Mucosa of descending colon (tissue), 3 donors: ENCODE measurements at regions of chr11 and their contacts with region 1.

Region 1: DNA sequence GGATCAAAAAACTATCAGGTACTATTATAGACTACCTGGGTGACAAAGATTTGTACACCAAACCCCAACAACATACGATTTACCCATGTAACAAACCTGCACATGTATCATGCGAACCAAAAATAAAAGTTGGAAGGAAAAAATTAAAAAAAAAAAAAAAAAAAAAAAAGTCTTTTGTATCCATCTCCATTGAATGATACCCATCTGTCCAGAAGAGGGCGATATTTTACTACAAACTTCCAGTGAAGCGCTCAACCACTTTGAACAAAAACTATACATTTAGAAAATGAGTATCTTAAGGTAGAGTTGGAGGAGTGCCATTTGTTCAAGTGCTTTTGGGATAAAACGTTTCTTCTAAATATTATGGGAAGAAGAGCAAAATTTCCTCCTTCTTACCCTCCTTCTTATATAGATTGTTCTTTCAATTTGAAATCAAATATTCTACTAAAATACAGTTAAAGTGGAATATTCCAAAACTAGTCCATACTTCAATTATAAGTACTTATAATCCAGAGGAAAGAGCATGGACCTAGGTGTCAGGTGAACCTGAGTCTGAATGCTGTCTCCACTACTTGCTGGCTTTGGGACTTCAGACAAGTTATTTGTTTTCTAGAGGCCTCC is 23.3 kb downstream of the ARL14EP start:
- DNase-seq: peak in 1 of 3 donors; percentile 39
- ATAC-seq: peak; percentile 64
- H3K4me3 ChIP-seq: no peak overlapping the region
- H3K4me1 ChIP-seq: no peaks in the 10 kb centered on the region
- CTCF ChIP-seq: no peak

Region 2: DNA sequence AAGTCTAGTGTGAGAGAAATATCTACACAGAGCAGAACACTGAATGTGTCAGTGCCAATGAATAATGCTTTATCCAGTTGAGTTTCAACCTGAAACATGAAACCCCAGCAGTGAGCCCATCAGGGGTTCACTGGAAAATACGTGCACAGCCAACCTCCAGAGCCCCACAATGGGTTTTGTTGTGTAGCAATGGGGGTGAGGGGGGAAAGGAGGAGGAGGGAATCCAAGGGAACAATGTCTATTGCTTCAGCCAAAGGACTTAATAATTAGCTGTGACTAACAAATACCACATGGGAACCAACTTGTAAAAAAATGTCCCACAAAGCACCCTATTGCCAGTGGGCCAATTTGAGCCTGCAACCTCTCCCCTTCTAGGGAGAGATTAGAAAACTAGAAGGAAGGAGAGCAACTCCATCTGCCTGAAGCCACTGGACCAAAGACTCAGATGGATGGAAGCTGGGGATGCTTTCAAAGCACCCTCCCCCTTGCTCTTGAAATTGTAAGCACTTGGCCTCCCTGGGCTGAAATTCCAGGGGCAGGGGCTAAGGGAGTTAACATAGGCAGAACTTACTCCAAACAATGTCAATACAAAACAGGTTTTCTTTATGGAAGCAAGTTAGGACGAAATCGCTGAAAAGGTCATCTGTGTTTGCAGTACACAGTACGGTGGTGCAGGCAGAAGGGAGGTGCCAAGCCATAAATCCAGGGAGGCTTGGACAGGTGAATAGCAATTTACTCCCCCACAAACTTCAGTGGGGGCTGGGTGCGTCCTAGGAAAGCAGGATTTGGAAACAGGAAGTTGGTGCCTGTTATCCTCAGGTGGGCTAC is 76.5 kb after region 1 on chr11:
- intact Hi-C with region 1: no loop called
- DNase-seq: peak in 2 of 3 donors; percentile 30 to 64
- ATAC-seq: peak; percentile 67
- H3K4me3 ChIP-seq: no peak overlapping the region
- H3K4me1 ChIP-seq: peaks cover 9% of the 10 kb centered on the region
- CTCF ChIP-seq: no peak

Region 3: GRCh38 chr11:30653606-30654005 is 307.4 kb after region 1 on chr11:
- intact Hi-C with region 1: loop called in 1 of 2 experiments (anchors 5 kb)
- DNase-seq: no peak
- ATAC-seq: no peak
- H3K4me3 ChIP-seq: no peak overlapping the region
- H3K4me1 ChIP-seq: no peaks in the 10 kb centered on the region
- CTCF ChIP-seq: no peak

Region 4: GRCh38 chr11:30855383-30856006 is 509.3 kb after region 1 on chr11:
- intact Hi-C with region 1: loop called (anchors 5 to 10 kb)
- DNase-seq: no peak
- ATAC-seq: no peak
- H3K4me3 ChIP-seq: no peak overlapping the region
- H3K4me1 ChIP-seq: no peaks in the 10 kb centered on the region
- CTCF ChIP-seq: no peak

Region 5: GRCh38 chr11:30868597-30869073 is 522.5 kb after region 1 on chr11:
- intact Hi-C with region 1: loop called in 1 of 2 experiments (anchors 10 kb)
- DNase-seq: no peak
- ATAC-seq: peak; percentile 25
- H3K4me3 ChIP-seq: no peak overlapping the region
- H3K4me1 ChIP-seq: no peaks in the 10 kb centered on the region
- CTCF ChIP-seq: no peak

Region 6: GRCh38 chr11:30917859-30918478 is 571.8 kb after region 1 on chr11:
- intact Hi-C with region 1: loop called (anchors 5 to 10 kb)
- DNase-seq: peak in 1 of 3 donors; percentile 35
- ATAC-seq: peak; percentile 39
- H3K4me3 ChIP-seq: no peak overlapping the region
- H3K4me1 ChIP-seq: no peaks in the 10 kb centered on the region
- CTCF ChIP-seq: peak; percentile 41